ENCODE measurements at regions of chr17 and their contacts with region 1.

Region 1: GRCh38 chr17:41801374-41802271 is 10.1 kb downstream of the P3H4 start:
- DNase-seq: peak; percentile 61
- H3K4me3 ChIP-seq: no peak overlapping the region
- CTCF ChIP-seq: peak; percentile 97

Region 2: GRCh38 chr17:41724476-41725050 is 77.1 kb before region 1 on chr17:
- in situ Hi-C with region 1: loop called (anchors 10 kb)
- DNase-seq: no peak
- H3K4me3 ChIP-seq: no peak overlapping the region
- CTCF ChIP-seq: no peak

Region 3: GRCh38 chr17:41758601-41759000 is 43.0 kb before region 1 on chr17:
- in situ Hi-C with region 1: loop called (anchors 5 kb)
- DNase-seq: no peak
- H3K4me3 ChIP-seq: no peak overlapping the region
- CTCF ChIP-seq: no peak

Region 4: GRCh38 chr17:41844971-41845370 is 43.3 kb after region 1 on chr17:
- in situ Hi-C with region 1: no loop called
- DNase-seq: no peak
- H3K4me3 ChIP-seq: no peak overlapping the region
- CTCF ChIP-seq: no peak

Region 5: GRCh38 chr17:41937970-41938954 is 136.6 kb after region 1 on chr17:
- in situ Hi-C with region 1: no loop called
- DNase-seq: no peak
- H3K4me3 ChIP-seq: no peak overlapping the region
- CTCF ChIP-seq: no peak